Common myeloid progenitor, CD34-positive (primary cell): ENCODE measurements at regions of chr1 and their contacts with region 1.

Region 1: GRCh38 chr1:17335821-17336710 is 28.1 kb downstream of the PADI4 start:
- DNase-seq: peak; percentile 64 to 81 (median 74)
- H3K4me3 ChIP-seq: no peak overlapping the region
- H3K27ac ChIP-seq: no peak overlapping the region
- H3K4me1 ChIP-seq: no peaks in the 10 kb centered on the region
- H3K27me3 ChIP-seq: no peaks in the 10 kb centered on the region

Region 2: GRCh38 chr1:17135530-17135929 is 200.5 kb before region 1 on chr1:
- CTCF ChIA-PET with region 1: no interaction called
- POLR2A ChIA-PET with region 1: no interaction called
- DNase-seq: no peak
- H3K4me3 ChIP-seq: no peak overlapping the region
- H3K27ac ChIP-seq: no peak overlapping the region
- H3K4me1 ChIP-seq: no peaks in the 10 kb centered on the region
- H3K27me3 ChIP-seq: no peaks in the 10 kb centered on the region

Region 3: GRCh38 chr1:17274186-17275170 is 61.6 kb before region 1 on chr1:
- CTCF ChIA-PET with region 1: interaction called, 12 read pairs
- POLR2A ChIA-PET with region 1: interaction called, 5 read pairs
- DNase-seq: peak; percentile 40 to 59 (median 44)
- H3K4me3 ChIP-seq: no peak overlapping the region
- H3K27ac ChIP-seq: no peak overlapping the region
- H3K4me1 ChIP-seq: peaks cover 0 to 40% (median 13%) of the 10 kb centered on the region in 4 experiments
- H3K27me3 ChIP-seq: no peaks in the 10 kb centered on the region

Region 4: GRCh38 chr1:17281775-17282181 is 54.3 kb before region 1 on chr1:
- CTCF ChIA-PET with region 1: interaction called, 12 read pairs
- POLR2A ChIA-PET with region 1: no interaction called
- DNase-seq: peak; percentile 77 to 95 (median 93)
- H3K4me3 ChIP-seq: peak overlapping the region in 1 of 7 experiments; percentile 23
- H3K27ac ChIP-seq: no peak overlapping the region
- H3K4me1 ChIP-seq: peaks cover 6 to 66% (median 30%) of the 10 kb centered on the region in 4 experiments
- H3K27me3 ChIP-seq: no peaks in the 10 kb centered on the region

Region 5: DNA sequence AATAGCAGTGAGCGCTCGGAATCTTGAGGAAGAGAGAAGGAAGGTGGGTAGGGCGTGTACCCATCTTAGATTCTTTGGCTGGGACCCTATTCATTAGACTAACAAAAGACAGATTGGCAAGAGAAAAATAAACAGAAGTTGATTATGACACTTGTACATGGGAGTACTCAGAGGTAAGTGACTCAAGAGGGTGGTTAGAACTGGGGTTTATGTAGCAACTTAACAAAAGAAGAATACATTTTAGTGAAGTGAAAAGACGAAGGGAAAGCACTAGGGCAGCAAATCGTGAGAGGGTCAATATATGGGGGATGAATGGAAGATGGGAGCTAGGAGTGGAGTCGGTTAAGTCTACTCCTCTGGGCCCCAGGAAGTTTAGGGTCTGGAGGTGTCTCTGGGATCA is 129.2 kb after region 1 on chr1:
- CTCF ChIA-PET with region 1: no interaction called
- POLR2A ChIA-PET with region 1: no interaction called
- DNase-seq: peak in 1 of 3 donors; percentile 13
- H3K4me3 ChIP-seq: no peak overlapping the region
- H3K27ac ChIP-seq: no peak overlapping the region
- H3K4me1 ChIP-seq: no peaks in the 10 kb centered on the region
- H3K27me3 ChIP-seq: peaks cover 0 to 2% (median 0%) of the 10 kb centered on the region in 5 experiments

Region 6: GRCh38 chr1:17732475-17732874 is 396.4 kb after region 1 on chr1:
- CTCF ChIA-PET with region 1: no interaction called
- POLR2A ChIA-PET with region 1: no interaction called
- DNase-seq: no peak
- H3K4me3 ChIP-seq: no peak overlapping the region
- H3K27ac ChIP-seq: no peak overlapping the region
- H3K4me1 ChIP-seq: no peaks in the 10 kb centered on the region
- H3K27me3 ChIP-seq: peaks cover 0 to 8% (median 6%) of the 10 kb centered on the region in 5 experiments